Colonic mucosa (tissue), 4 donors: ENCODE measurements at regions of chr3 and their contacts with region 1.

Region 1: GRCh38 chr3:43852066-43852465 is 161.3 kb downstream of the ABHD5 start:
- DNase-seq: no peak
- H3K4me3 ChIP-seq: no peak overlapping the region
- H3K27ac ChIP-seq: no peak overlapping the region
- H3K4me1 ChIP-seq: no peaks in the 10 kb centered on the region
- H3K27me3 ChIP-seq: no peaks in the 10 kb centered on the region
- CTCF ChIP-seq: no peak

Region 2: GRCh38 chr3:44198284-44199269 is 346.5 kb after region 1 on chr3:
- intact Hi-C with region 1: loop called (anchors 5 kb)
- DNase-seq: peak; percentile 73
- H3K4me3 ChIP-seq: no peak overlapping the region
- H3K27ac ChIP-seq: no peak overlapping the region
- H3K4me1 ChIP-seq: no peaks in the 10 kb centered on the region
- H3K27me3 ChIP-seq: no peaks in the 10 kb centered on the region
- CTCF ChIP-seq: peak; percentile 80